Thyroid gland (tissue), 4 donors: ENCODE measurements at regions of chr17 and their contacts with region 1.

Region 1: GRCh38 chr17:73311781-73312641 is at the start of gene CDC42EP4:
- DNase-seq: peak; percentile 95 to 96
- H3K4me3 ChIP-seq: peak within 1 kb of the TSS; percentile 63 to 99 (median 99)
- H3K27ac ChIP-seq: peak within 1 kb of the TSS; percentile 96 to 100 (median 96)
- H3K4me1 ChIP-seq: peaks cover 28 to 36% of the 10 kb centered on the region in 2 donors
- H3K27me3 ChIP-seq: no peaks in the 10 kb centered on the region
- CTCF ChIP-seq: no peak
- POLR2A ChIP-seq: peak; percentile 88 to 100
- total RNA-seq, gene CDC42EP4: 68.7 to 172 (median 97.3) TPM

Region 2: GRCh38 chr17:73240561-73240960 is 71.5 kb before region 1 on chr17:
- intact Hi-C with region 1: no loop called
- DNase-seq: no peak
- H3K4me3 ChIP-seq: no peak overlapping the region
- H3K27ac ChIP-seq: no peak overlapping the region
- H3K4me1 ChIP-seq: peaks cover 0 to 16% of the 10 kb centered on the region in 2 donors
- H3K27me3 ChIP-seq: no peaks in the 10 kb centered on the region
- CTCF ChIP-seq: no peak
- POLR2A ChIP-seq: no peak

Region 3: GRCh38 chr17:73365906-73366623 is 54.1 kb after region 1 on chr17:
- intact Hi-C with region 1: loop called (anchors 2 kb)
- DNase-seq: peak; percentile 23 to 29
- H3K4me3 ChIP-seq: no peak overlapping the region
- H3K27ac ChIP-seq: peak overlapping the region; percentile 45 to 70 (median 65)
- H3K4me1 ChIP-seq: peaks cover 0 to 15% of the 10 kb centered on the region in 2 donors
- H3K27me3 ChIP-seq: no peaks in the 10 kb centered on the region
- CTCF ChIP-seq: no peak
- POLR2A ChIP-seq: no peak